ENCODE measurements at regions of chr16 and their contacts with region 1.

Region 1: GRCh38 chr16:67226804-67227557 is at the start of gene TMEM208:
- DNase-seq: peak; percentile 92 to 98
- ATAC-seq: peak; percentile 87 to 97
- H3K4me3 ChIP-seq: peak within 1 kb of the TSS; percentile 83
- H3K27ac ChIP-seq: peak within 1 kb of the TSS; percentile 89 to 95
- H3K4me1 ChIP-seq: peaks cover 13% of the 10 kb centered on the region
- CTCF ChIP-seq: peak; percentile 36; the same call in 1 of the 3 replicates
- EP300 ChIP-seq: no peak
- POLR2A ChIP-seq: no peak; the same call in 1 of the 2 replicates
- RAD21 ChIP-seq: no peak
- polyA plus RNA-seq, gene TMEM208: 70.2 and 73.5 TPM in 2 replicates

Region 2: GRCh38 chr16:67246934-67247697 is 20.1 kb after region 1 on chr16 and contains the start of gene FHOD1:
- CTCF ChIA-PET with region 1: interaction called, 138 read pairs
- POLR2A ChIA-PET with region 1: interaction called, 30 read pairs
- DNase-seq: peak; percentile 82 to 95
- ATAC-seq: peak; percentile 38 to 79
- H3K4me3 ChIP-seq: peak within 1 kb of the TSS; percentile 74
- H3K27ac ChIP-seq: peak within 1 kb of the TSS; percentile 91 to 98
- H3K4me1 ChIP-seq: peaks cover 52% of the 10 kb centered on the region
- CTCF ChIP-seq: no peak
- EP300 ChIP-seq: no peak
- POLR2A ChIP-seq: peak; percentile 59
- RAD21 ChIP-seq: no peak
- polyA plus RNA-seq, gene FHOD1: 16.1 and 18.1 TPM in 2 replicates

Region 3: GRCh38 chr16:67311607-67312488 is 84.9 kb after region 1 on chr16:
- CTCF ChIA-PET with region 1: no interaction called
- POLR2A ChIA-PET with region 1: no interaction called
- DNase-seq: peak; percentile 92 to 94
- ATAC-seq: peak; percentile 97 to 99
- H3K4me3 ChIP-seq: no peak overlapping the region
- H3K27ac ChIP-seq: peak overlapping the region; percentile 32 to 76; a peak in 5 of 6 replicates
- H3K4me1 ChIP-seq: peaks cover 21% of the 10 kb centered on the region
- CTCF ChIP-seq: no peak
- EP300 ChIP-seq: peak in 1 of 2 experiments; percentile 37; a peak in 1 of 5 replicates
- POLR2A ChIP-seq: no peak
- RAD21 ChIP-seq: no peak

Region 4: GRCh38 chr16:67490335-67491096 is 263.5 kb after region 1 on chr16:
- CTCF ChIA-PET with region 1: no interaction called
- POLR2A ChIA-PET with region 1: no interaction called
- DNase-seq: no peak
- ATAC-seq: no peak
- H3K4me3 ChIP-seq: no peak overlapping the region
- H3K27ac ChIP-seq: no peak overlapping the region
- H3K4me1 ChIP-seq: no peaks in the 10 kb centered on the region
- CTCF ChIP-seq: no peak
- EP300 ChIP-seq: no peak
- POLR2A ChIP-seq: no peak
- RAD21 ChIP-seq: no peak

Measured in A549 (cell line).